HEK293 (cell line): ENCODE measurements at regions of chr21 and their contacts with region 1.

Region 1: DNA sequence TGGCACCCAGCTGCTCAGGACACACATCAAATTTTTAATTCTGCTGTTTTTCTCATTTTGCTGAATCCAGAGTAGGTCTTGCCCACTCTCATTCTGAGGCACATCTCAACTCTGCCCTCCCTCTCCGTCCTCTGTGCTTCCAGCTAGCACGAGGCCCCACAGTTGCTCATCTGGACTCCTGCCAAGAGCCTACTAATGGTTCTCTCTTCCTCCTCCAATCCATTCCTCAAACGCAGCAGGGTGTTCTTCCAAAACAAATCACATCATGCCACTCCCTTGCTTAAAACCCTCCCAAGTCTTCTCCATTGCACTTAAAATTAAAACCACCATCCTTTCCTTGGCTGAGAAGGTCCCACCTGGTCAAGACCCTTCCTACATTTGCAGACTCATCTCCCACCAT is 49.8 kb upstream of the SCAF4 start:
- H3K4me3 ChIP-seq: no peak overlapping the region
- H3K27ac ChIP-seq: no peak overlapping the region
- H3K4me1 ChIP-seq: peaks cover 9% of the 10 kb centered on the region
- CTCF ChIP-seq: no peak

Region 2: GRCh38 chr21:31629972-31630711 is 151.6 kb before region 1 on chr21:
- CTCF ChIA-PET with region 1: no interaction called
- POLR2A ChIA-PET with region 1: no interaction called
- H3K4me3 ChIP-seq: no peak overlapping the region
- H3K27ac ChIP-seq: no peak overlapping the region
- H3K4me1 ChIP-seq: 0 out of 2 replicates have a peak, but pooled peaks cover 4% of the 10 kb centered on the region
- CTCF ChIP-seq: no peak

Region 3: DNA sequence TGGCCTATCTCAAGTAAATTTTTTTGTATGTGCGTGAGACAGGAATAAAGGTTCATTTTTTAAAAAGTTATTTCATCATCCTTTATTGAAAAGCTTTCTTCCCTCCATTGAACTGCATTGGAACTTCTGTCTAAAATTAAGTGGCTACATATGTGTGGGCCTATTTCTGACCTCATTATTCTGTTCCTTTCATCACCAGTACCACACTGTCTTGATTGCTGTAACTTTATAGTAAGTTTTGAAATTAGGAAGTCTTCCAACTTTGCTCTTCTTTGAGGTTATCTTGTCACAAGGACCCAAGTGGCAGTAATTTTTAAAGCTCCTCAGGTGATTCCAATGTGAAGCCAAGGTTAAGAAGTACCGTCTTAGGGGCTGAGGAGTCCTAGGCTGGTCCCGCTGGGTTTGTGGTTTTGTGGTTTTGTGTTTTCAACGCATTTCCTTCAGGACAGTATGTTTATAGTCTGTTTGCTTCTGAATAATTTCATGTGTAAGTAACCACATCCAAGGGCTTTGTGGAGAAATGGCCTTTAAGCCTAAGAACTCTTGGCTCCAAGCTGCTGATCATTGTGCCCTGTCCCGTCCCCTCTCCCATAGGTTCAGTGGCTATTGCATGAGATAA is 37.4 kb before region 1 on chr21:
- CTCF ChIA-PET with region 1: interaction called, 12 read pairs
- POLR2A ChIA-PET with region 1: no interaction called
- H3K4me3 ChIP-seq: no peak overlapping the region
- H3K27ac ChIP-seq: no peak overlapping the region
- H3K4me1 ChIP-seq: no peaks in the 10 kb centered on the region
- CTCF ChIP-seq: no peak

Region 4: GRCh38 chr21:31798842-31799704 is 17.3 kb after region 1 on chr21:
- CTCF ChIA-PET with region 1: interaction called, 16 read pairs
- POLR2A ChIA-PET with region 1: no interaction called
- H3K4me3 ChIP-seq: no peak overlapping the region
- H3K27ac ChIP-seq: no peak overlapping the region
- H3K4me1 ChIP-seq: no peaks in the 10 kb centered on the region
- CTCF ChIP-seq: no peak

Region 5: DNA sequence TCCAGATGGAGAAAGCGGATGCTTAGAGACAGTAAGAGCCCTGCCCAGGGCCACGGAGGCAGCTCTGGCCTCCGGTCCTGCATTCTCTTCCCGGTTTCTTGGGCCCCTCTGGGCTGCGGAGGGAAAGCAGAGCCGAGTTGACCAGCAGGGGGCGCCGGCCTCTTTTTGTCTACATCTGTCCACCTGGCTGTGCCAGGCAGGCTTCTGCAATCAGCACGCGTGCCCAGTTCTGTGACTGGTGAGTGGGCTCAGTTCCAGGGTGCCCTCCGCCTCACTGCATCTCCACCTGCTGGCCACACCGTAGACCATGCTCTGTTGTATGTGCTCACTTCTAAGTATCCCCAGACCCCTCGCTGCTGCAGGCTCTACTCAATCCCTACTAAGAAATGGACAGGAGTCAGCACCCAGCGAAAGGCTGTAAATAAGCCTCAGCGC is 84.4 kb after region 1 on chr21:
- CTCF ChIA-PET with region 1: interaction called, 13 read pairs
- POLR2A ChIA-PET with region 1: no interaction called
- H3K4me3 ChIP-seq: no peak overlapping the region
- H3K27ac ChIP-seq: no peak overlapping the region
- H3K4me1 ChIP-seq: no peaks in the 10 kb centered on the region
- CTCF ChIP-seq: peak; percentile 87

Region 6: DNA sequence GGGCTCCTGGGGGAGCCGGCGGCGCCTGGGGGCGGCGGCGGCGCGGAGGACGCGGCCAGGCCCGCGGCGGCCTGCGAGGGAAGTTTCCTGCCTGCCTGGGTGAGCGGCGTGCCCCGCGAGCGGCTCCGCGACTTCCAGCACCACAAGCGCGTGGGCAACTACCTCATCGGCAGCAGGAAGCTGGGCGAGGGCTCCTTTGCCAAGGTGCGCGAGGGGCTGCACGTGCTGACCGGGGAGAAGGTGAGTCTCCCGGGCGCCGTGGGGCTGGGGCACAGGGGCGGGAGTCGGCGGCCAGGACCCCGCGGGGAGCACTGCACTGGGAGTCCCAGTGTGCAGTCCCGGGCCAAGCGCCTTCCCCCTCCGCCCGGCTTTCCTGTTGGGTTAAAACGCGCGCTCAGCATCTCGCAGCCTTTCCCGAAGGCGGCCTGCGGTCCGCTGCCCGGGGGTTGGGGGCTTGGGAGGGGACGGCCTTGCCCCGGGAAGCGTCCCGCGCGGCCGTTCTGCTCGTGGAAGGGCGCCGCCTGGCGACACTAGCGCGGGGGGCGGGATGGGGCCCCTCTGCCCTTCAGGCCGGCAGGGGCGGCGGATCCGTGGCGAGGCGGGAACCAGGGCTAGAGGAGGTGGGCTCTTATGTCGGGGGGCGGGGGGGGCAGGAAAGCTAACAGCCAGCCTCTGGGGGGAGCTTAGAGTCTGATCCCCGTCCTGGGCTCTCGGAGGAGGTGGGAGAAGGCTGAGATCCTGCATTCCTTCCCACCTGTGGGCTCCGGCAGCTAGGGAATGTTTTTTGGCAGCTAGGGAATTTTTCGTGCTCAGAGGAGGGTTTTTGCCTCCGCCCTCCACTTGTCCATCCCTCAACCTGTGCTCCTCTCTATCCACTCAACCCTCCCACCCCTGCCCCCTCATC is 92.2 kb after region 1 on chr21:
- CTCF ChIA-PET with region 1: interaction called, 14 read pairs
- POLR2A ChIA-PET with region 1: no interaction called
- H3K4me3 ChIP-seq: peak overlapping the region; percentile 75
- H3K27ac ChIP-seq: peak overlapping the region; percentile 81; the same call in 1 of the 2 replicates
- H3K4me1 ChIP-seq: peaks cover 5% of the 10 kb centered on the region; the same call in 1 of the 2 replicates
- CTCF ChIP-seq: peak; percentile 94